Activated CD8-positive, alpha-beta memory T cell treated with anti-CD3 and anti-CD28 coated beads, Interleukin-2, amount 10 ng/mL, durations not matched to agents 7 days and 5 days (primary cell): ENCODE measurements at regions of chr10 and their contacts with region 1.

Region 1: GRCh38 chr10:110210674-110211464 is 3.5 kb downstream of the MXI1 start:
- DNase-seq: peak; percentile 96
- ATAC-seq: peak; percentile 74
- H3K4me3 Mint-ChIP-seq: peak overlapping the region; percentile 81
- H3K27ac Mint-ChIP-seq: peak overlapping the region; percentile 92
- H3K4me1 Mint-ChIP-seq: peaks cover 63% of the 10 kb centered on the region
- H3K27me3 Mint-ChIP-seq: peaks cover 13% of the 10 kb centered on the region

Region 2: GRCh38 chr10:110137142-110137545 is 73.7 kb before region 1 on chr10:
- CTCF ChIA-PET with region 1: interaction called, 75 read pairs
- DNase-seq: no peak
- ATAC-seq: peak; percentile 72
- H3K4me3 Mint-ChIP-seq: no peak overlapping the region
- H3K27ac Mint-ChIP-seq: peak overlapping the region; percentile 25
- H3K4me1 Mint-ChIP-seq: peaks cover 28% of the 10 kb centered on the region
- H3K27me3 Mint-ChIP-seq: no peaks in the 10 kb centered on the region

Region 3: DNA sequence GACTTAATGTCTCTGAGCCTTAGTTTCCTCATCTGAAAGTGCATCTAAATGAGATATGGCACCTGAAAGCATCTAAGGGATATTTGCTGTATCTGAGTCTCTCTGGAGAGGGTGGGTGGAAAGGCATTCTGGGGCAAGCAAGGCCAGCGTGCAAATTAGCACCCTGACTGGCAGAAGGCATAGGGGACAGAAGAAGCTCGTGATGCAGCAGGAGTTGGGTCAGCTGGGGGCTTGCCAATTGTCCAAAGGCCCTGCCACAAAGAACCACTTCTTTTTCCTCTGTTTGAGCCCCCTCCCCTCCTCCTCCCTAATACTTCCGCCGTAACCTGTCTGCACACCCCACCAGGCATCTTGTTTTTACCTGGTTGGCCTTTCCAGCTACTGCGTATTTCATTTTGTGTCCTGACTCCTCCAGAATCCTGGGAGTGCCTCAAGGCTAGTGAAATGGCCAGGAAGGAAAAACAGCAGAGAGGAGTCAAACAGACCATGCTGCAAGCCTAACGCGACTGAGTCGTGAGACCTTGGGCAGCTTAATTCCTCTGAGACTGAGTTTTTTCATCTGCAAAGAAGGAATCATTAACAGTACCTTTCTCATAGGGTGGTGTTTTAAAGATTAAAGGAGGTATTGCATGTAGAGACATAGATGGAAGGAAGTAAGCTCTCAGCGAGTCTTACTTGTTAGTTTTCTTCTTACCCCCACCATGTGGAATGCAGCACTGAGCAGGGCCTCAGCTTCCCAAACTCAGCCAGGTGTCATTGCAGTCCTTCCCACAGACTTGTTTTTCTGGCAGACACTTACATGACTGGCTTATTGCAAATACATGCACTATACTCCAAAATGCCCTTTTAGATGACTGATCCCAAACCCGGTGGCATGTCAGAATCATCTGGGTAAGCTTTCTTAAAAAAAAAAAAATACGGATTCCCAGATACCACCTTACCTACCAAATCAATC is 52.5 kb before region 1 on chr10:
- CTCF ChIA-PET with region 1: interaction called, 11 read pairs
- DNase-seq: peak; percentile 35
- ATAC-seq: no peak
- H3K4me3 Mint-ChIP-seq: no peak overlapping the region
- H3K27ac Mint-ChIP-seq: peak overlapping the region; percentile 5
- H3K4me1 Mint-ChIP-seq: peaks cover 44% of the 10 kb centered on the region
- H3K27me3 Mint-ChIP-seq: peaks cover 83% of the 10 kb centered on the region

Region 4: GRCh38 chr10:110192552-110192951 is 18.3 kb before region 1 on chr10:
- CTCF ChIA-PET with region 1: interaction called, 23 read pairs
- DNase-seq: peak; percentile 47
- ATAC-seq: no peak
- H3K4me3 Mint-ChIP-seq: no peak overlapping the region
- H3K27ac Mint-ChIP-seq: no peak overlapping the region
- H3K4me1 Mint-ChIP-seq: peaks cover 13% of the 10 kb centered on the region
- H3K27me3 Mint-ChIP-seq: peaks cover 71% of the 10 kb centered on the region

Region 5: DNA sequence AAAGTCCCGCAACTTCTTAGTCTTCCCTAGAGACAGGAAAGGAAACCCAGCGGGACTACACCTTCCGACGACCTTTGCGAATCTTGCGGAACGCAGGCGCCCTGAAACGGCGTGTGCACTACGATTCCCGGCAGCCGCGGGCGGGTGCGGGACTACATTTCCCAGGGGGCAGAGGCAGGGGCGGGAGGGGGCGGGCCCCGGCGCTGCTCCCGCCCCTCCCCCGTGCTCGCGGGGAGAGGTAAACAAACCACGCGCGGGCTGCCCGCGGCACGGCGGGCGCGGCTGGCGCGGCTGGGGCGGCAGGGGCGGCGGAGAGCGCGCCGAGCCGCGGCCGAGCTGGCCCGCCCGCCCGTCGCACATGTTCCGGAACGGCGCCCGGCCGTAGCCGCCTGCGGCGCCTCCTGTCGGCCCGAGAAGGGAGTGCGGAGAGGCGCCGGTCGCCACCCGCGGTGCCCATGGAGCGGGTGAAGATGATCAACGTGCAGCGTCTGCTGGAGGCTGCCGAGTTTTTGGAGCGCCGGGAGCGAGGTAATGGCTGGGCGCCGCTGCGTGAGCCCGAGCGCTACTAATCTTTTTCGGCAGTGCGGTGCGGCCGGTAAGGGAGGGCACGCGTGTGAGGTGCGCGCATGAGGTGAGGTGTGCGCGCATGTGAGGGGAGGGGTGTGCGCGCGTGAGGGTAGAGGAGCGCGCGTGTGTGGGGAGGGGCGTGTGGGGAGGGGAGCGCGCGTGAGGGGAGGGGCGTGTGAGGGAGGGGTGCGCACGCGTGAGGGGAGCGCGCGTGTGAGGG is 15.1 kb after region 1 on chr10:
- CTCF ChIA-PET with region 1: interaction called, 154 read pairs
- DNase-seq: peak; percentile 91
- ATAC-seq: peak; percentile 78
- H3K4me3 Mint-ChIP-seq: peak overlapping the region; percentile 90
- H3K27ac Mint-ChIP-seq: peak overlapping the region; percentile 91
- H3K4me1 Mint-ChIP-seq: peaks cover 38% of the 10 kb centered on the region
- H3K27me3 Mint-ChIP-seq: peaks cover 7% of the 10 kb centered on the region

Region 6: DNA sequence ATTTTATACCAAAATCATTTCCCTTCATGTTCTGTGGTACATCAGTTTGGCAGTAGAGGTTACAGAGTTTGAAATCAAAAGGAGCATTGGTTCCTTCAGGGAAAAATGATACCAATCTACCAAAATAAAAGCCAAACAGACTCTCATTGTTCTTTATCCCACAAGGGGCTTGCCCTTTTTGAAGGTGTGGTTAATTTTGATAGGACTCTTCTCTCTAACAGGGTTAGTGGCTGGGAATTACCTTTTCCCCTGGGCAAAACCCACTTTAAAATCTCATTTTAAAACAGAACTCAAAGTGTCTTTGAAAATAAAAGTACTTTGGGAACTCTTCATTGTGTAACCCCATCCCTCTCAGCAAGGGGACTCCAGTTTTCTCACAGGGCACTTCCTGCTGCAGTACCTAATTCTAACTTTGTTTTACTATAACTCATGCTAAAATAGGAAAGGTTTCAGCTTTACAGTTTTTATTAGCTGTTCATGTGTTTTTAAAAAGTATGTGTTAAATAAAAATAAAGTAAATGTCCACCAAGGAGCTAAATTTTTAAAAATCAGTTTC is 63.3 kb after region 1 on chr10:
- CTCF ChIA-PET with region 1: interaction called, 67 read pairs
- DNase-seq: no peak
- ATAC-seq: no peak
- H3K4me3 Mint-ChIP-seq: no peak overlapping the region
- H3K27ac Mint-ChIP-seq: no peak overlapping the region
- H3K4me1 Mint-ChIP-seq: peaks cover 22% of the 10 kb centered on the region
- H3K27me3 Mint-ChIP-seq: peaks cover 26% of the 10 kb centered on the region

Region 7: GRCh38 chr10:110279407-110279986 is 68.6 kb after region 1 on chr10:
- CTCF ChIA-PET with region 1: interaction called, 67 read pairs
- DNase-seq: peak; percentile 63
- ATAC-seq: peak; percentile 67
- H3K4me3 Mint-ChIP-seq: no peak overlapping the region
- H3K27ac Mint-ChIP-seq: no peak overlapping the region
- H3K4me1 Mint-ChIP-seq: peaks cover 9% of the 10 kb centered on the region
- H3K27me3 Mint-ChIP-seq: peaks cover 21% of the 10 kb centered on the region